Pancreas (tissue), 10 donors: ENCODE measurements at regions of chr16 and their contacts with region 1.

Region 1: DNA sequence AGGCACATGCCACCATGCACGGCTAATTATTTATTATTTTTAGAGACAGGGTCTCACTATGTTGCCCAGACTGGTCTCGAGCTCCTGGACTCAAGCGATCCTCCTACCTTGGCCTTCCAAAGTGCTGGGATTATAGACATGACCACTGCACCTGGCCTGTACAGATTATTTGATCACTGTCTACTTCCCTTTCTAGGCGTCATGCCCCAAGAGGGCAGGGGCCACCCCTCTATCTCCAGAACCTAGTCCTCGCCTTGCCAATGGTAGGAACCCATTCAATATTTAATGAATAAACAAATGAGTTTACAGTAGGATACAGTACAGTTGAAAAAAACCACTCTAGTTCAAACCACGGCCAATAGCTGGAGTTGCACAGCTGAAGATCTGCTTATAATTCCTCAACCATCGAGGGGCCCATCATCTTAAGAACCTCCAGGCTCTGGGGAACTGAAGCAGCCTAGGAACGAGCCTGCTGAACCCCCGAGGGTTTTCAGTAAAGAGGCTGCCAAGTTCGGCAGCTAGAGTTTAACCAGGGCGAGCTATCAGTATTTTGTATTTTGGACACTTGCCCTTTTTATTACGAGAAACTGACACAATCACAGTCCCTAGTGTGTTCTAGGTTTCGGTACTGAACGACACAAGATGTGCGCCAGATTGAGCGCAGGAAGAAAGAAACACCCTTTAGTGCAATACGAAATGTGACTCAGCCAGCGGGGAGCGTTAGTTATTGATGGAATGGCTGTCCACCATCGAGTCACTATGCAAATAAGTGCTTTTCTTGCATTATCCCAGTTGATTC is 14.6 kb downstream of the ADCY9 start:
- DNase-seq: peak in 3 of 6 donors; percentile 38 to 44 (median 39)
- ATAC-seq: peak; percentile 75 to 81 (median 80)
- H3K4me3 ChIP-seq: no peak overlapping the region
- H3K27ac ChIP-seq: peak overlapping the region in 1 of 4 donors; percentile 10
- H3K4me1 ChIP-seq: peaks cover 0 to 28% (median 0%) of the 10 kb centered on the region in 3 donors
- H3K27me3 ChIP-seq: no peaks in the 10 kb centered on the region
- CTCF ChIP-seq: no peak

Region 2: DNA sequence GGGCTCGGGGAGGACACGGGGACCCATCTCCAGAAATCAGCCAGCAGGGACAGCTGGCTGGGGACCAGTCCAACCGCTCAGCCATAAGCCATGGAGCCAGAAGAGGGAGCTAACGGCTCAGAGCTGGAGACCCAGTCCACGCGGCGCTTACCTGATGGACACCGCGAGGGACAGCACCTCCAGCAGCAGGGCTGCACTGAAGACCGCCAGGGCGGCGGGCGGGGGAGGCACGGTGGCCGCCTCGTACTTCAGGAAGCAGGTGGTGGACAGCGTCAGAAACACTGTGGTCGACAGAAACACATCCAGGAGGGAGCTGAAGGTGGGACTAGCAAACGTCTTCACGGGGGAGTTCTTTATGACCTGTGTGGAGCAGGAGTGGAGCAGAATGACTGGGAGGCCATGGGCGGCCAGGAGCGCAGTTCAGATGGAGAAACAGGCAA is 118.5 kb before region 1 on chr16:
- intact Hi-C with region 1: loop called in 1 of 3 experiments (anchors 10 kb)
- DNase-seq: peak; percentile 67 to 92 (median 76)
- ATAC-seq: peak; percentile 89 to 97 (median 96)
- H3K4me3 ChIP-seq: no peak overlapping the region
- H3K27ac ChIP-seq: no peak overlapping the region
- H3K4me1 ChIP-seq: no peaks in the 10 kb centered on the region
- H3K27me3 ChIP-seq: no peaks in the 10 kb centered on the region
- CTCF ChIP-seq: peak; percentile 29 to 59 (median 54)

Region 3: DNA sequence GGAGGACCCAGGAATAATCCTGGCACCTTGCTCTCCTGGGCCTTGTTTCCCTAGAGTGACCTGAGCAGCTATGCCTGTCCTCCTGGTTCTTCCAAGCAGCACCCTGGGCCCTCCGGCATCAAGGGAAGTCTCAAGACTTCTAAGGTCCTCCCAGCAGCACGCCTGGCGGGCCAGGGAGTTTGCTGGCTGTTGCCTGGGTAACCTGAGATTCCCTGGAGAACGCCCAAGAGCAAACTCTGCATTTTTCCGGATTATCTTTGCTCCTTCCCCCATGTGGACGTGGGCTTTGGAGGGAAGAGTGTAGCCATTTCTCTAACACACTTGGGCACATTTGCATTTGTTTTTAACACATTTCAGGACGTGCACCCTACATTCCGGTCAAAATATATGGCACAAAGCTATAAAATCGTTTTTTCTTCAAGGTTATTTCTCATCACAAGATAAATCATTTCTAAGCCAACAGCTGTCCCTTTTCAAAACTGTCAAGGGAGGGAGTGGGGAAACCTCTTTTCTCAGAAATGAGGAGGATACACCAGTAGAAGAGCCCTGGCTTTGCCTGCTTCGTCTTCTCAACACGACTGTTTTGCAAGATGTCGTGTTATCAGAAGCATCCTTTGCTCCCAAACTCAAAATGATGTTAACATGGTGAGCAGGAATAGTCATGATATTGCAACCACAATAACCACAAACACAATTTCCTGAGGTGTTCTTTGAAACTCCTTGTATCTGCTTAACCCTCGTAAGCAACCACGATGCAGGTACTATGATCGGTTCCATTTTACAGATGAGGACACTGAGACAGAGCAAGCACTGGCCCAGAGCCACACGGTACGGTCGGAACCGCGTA is 101.9 kb before region 1 on chr16:
- intact Hi-C with region 1: loop called in 1 of 3 experiments (anchors 10 kb)
- DNase-seq: no peak
- ATAC-seq: peak in 3 of 4 donors; percentile 38 to 61 (median 50)
- H3K4me3 ChIP-seq: no peak overlapping the region
- H3K27ac ChIP-seq: no peak overlapping the region
- H3K4me1 ChIP-seq: no peaks in the 10 kb centered on the region
- H3K27me3 ChIP-seq: no peaks in the 10 kb centered on the region
- CTCF ChIP-seq: no peak